Panc1 (cell line): ENCODE measurements at regions of chr12 and their contacts with region 1.

Region 1: DNA sequence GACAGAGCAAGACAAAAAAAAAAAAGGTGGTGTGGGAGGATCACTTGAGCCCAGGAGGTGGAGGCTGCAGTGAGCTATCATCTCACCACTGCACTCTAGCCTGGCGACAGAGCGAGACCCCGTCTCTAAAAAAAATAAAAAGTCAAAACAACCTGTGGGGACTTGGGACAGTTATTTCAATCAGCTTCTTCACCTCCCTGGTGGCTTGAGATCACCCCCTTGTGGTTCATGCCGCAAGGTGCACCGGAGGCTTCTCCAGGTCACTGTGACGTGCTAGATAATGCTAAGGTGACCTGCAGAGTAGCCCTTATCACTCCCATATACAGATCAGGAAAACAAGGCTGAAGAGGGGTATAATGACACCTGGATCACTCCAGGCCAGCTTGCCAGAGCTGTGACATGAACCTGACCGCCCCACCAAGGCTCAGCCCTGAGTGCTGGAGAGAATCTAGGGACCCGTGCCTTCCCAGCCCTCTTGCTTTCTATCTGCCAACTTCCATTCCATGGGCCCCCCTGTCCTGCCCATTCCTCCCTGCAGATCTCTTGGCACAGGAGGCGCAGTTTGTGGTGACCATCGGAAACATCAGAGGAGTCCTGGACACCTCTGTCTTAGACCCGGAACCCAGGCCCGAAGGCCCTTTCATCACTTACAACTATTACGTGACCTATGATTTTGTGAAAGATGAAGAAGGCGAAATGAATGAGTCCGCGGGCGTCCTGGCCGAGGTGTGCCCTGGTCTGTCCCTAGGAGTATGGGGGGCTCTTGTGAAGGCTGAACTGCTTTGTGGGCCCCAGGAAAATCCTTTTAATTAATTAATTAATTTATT is 8.1 kb downstream of the LRRC43 start:
- DNase-seq: peak; percentile 57
- ATAC-seq: peak; percentile 92
- H3K4me3 ChIP-seq: no peak overlapping the region
- H3K27ac ChIP-seq: no peak overlapping the region
- H3K4me1 ChIP-seq: no peaks in the 10 kb centered on the region
- H3K27me3 ChIP-seq: no peaks in the 10 kb centered on the region
- CTCF ChIP-seq: peak; percentile 95

Region 2: DNA sequence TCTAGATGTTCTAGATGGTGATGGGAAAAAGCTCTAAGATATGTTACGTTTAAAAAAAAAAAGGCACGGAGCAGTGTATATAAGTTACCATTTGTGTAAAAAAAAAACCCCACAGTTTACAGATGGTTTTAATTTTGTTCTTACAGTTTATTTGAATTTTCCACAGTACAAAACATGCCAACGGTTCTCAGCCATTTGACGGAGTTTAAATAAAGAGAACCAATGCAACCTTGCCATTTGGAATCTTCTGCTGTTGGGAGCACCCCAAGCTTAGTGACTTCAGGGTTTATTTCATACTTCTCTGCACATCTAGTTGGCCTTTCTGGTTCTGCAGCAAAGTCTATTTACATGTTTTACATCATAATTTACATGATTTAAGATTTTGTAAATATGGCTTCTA is 324.7 kb before region 1 on chr12:
- CTCF ChIA-PET with region 1: interaction called, 12 read pairs
- POLR2A ChIA-PET with region 1: no interaction called
- in situ Hi-C with region 1: no loop called
- intact Hi-C with region 1: no loop called
- DNase-seq: no peak
- ATAC-seq: no peak
- H3K4me3 ChIP-seq: no peak overlapping the region
- H3K27ac ChIP-seq: no peak overlapping the region
- H3K4me1 ChIP-seq: peaks cover 3% of the 10 kb centered on the region; the same call in 1 of the 2 replicates
- H3K27me3 ChIP-seq: no peaks in the 10 kb centered on the region
- CTCF ChIP-seq: no peak

Region 3: GRCh38 chr12:122130150-122130549 is 60.9 kb before region 1 on chr12:
- CTCF ChIA-PET with region 1: no interaction called
- POLR2A ChIA-PET with region 1: interaction called, 3 read pairs
- in situ Hi-C with region 1: no loop called
- intact Hi-C with region 1: loop called (anchors 2 kb)
- DNase-seq: no peak
- ATAC-seq: peak; percentile 33; the same call in 1 of the 2 replicates
- H3K4me3 ChIP-seq: no peak overlapping the region
- H3K27ac ChIP-seq: no peak overlapping the region; the same call in 1 of the 2 replicates
- H3K4me1 ChIP-seq: peaks cover 23% of the 10 kb centered on the region
- H3K27me3 ChIP-seq: no peaks in the 10 kb centered on the region
- CTCF ChIP-seq: no peak

Region 4: DNA sequence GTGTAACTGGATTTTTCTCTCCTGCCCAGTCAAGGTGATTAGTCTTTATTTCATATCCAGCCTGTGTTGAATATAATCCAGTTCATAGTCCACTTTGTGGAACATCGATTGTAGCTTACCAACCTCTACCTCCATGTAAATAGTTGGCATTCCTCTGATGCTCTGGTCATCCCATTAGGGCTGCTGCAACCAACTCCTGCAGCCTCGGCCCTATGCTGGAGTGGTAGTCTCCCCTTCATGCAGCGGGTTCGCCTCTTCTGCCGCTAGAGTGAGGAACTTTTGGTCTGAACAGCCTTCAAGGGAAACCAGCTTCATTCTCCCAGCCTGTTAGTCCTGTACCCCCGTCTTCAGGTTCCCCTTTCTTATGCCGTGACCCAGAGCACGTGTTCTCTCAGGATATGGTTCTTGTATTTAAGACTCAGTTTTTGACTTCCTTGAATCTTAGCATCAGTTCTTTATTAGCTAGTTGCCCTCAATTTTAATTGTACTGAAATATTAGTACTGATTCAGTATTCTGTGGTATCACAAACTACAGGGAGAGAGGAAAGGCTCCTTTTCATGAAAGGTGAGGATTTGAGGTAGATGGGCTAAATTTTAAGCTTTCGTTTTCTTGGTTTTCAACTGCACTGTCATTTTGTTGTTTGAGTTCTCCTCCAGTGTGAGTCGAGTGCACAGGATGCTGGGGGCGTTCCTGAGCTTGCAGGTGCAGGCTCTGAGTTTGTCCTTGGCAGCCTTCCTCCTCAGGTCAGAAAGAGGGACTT is 1815.2 kb after region 1 on chr12:
- CTCF ChIA-PET with region 1: no interaction called
- POLR2A ChIA-PET with region 1: no interaction called
- in situ Hi-C with region 1: no loop called
- intact Hi-C with region 1: no loop called
- DNase-seq: no peak
- ATAC-seq: no peak
- H3K4me3 ChIP-seq: no peak overlapping the region
- H3K27ac ChIP-seq: no peak overlapping the region
- H3K4me1 ChIP-seq: no peaks in the 10 kb centered on the region
- H3K27me3 ChIP-seq: no peaks in the 10 kb centered on the region
- CTCF ChIP-seq: no peak